Naive thymus-derived CD4-positive, alpha-beta T cell (primary cell): ENCODE measurements at regions of chr4 and their contacts with region 1.

Region 1: GRCh38 chr4:52861879-52862616 is at the start of gene RASL11B:
- DNase-seq: peak; percentile 73 to 91 (median 84)
- ATAC-seq: peak; percentile 99
- H3K4me3 ChIP-seq: peak within 1 kb of the TSS; percentile 58
- H3K4me3 Mint-ChIP-seq: peak within 1 kb of the TSS; percentile 74 to 88 (median 84)
- H3K27ac ChIP-seq: peak within 1 kb of the TSS; percentile 34
- H3K27ac Mint-ChIP-seq: peak within 1 kb of the TSS in 5 of 9 donors; percentile 16 to 87 (median 49)
- H3K4me1 ChIP-seq: peaks cover 0 to 6% of the 10 kb centered on the region in 2 donors
- H3K4me1 Mint-ChIP-seq: peaks cover 0 to 17% (median 8%) of the 10 kb centered on the region in 7 donors
- H3K27me3 ChIP-seq: no peaks in the 10 kb centered on the region
- H3K27me3 Mint-ChIP-seq: peaks cover 28 to 41% (median 38%) of the 10 kb centered on the region in 5 donors
- total RNA-seq, gene RASL11B: 0.41 TPM in 1 of 5 experiments, not detected in the others

Region 2: GRCh38 chr4:52659001-52659721 is 202.9 kb before region 1 on chr4 and contains the start of gene USP46:
- CTCF ChIA-PET with region 1: no interaction called
- POLR2A ChIA-PET with region 1: no interaction called
- intact Hi-C with region 1: loop called in 1 of 2 experiments (anchors 5 kb)
- DNase-seq: peak in 7 of 9 donors; percentile 3 to 65 (median 15)
- ATAC-seq: peak; percentile 86
- H3K4me3 ChIP-seq: peak within 1 kb of the TSS; percentile 52
- H3K4me3 Mint-ChIP-seq: peak within 1 kb of the TSS; percentile 83 to 92 (median 87)
- H3K27ac ChIP-seq: peak within 1 kb of the TSS; percentile 37
- H3K27ac Mint-ChIP-seq: peak within 1 kb of the TSS in 6 of 9 donors; percentile 12 to 77 (median 58)
- H3K4me1 ChIP-seq: peaks cover 5% of the 10 kb centered on the region in 2 donors
- H3K4me1 Mint-ChIP-seq: peaks cover 12 to 23% (median 17%) of the 10 kb centered on the region in 7 donors
- H3K27me3 ChIP-seq: no peaks in the 10 kb centered on the region
- H3K27me3 Mint-ChIP-seq: peaks cover 0 to 24% (median 16%) of the 10 kb centered on the region in 5 donors
- total RNA-seq, gene USP46: 3.0 to 11.7 (median 4.0) TPM

Region 3: DNA sequence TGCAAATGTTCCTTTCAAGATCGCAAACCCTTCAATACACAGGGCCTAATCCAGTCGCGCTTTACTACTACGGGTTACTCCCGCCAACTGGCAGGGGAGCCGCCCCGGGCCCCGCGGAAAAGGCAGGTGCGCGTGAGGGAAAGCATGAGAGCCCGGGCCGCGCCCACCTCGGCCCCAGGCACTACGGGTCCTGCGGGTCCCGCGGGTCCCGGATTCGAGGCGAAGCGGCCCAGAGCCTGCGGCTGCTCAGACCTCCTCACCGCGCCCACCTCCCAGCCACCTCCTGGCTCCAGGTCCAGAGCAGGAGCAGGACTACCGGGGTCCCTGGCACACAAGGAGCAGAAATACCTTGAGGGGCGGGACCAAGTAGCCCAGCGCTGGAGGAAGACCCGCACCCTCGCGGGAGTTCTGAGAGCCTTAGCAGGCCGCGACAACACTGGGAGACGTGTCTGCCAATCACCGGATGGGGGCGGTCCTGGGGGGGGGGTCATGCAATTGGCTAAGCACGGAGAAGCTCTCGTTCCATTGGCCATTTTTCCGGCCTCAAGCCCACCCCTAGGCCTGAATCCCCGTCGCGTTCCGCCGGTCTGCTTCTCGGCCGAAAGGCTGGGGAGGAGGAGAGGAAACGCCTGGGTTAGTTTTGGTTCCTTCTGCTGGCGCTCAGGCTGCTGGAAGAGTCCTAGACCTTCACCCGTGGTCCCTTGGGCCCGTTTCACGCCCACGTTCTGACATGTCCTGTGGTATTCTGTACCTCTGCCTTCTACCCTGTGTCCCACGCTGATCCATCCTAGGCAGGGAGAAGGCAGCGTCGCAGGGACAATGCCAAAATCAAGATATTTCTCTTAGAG is 139.9 kb before region 1 on chr4:
- CTCF ChIA-PET with region 1: no interaction called
- POLR2A ChIA-PET with region 1: no interaction called
- intact Hi-C with region 1: loop called (anchors 1 kb)
- DNase-seq: peak; percentile 62 to 87 (median 81)
- ATAC-seq: peak; percentile 99
- H3K4me3 ChIP-seq: peak overlapping the region; percentile 83
- H3K4me3 Mint-ChIP-seq: peak overlapping the region; percentile 55 to 90 (median 79)
- H3K27ac ChIP-seq: peak overlapping the region; percentile 86
- H3K27ac Mint-ChIP-seq: peak overlapping the region; percentile 54 to 95 (median 86)
- H3K4me1 ChIP-seq: no peaks in the 10 kb centered on the region
- H3K4me1 Mint-ChIP-seq: peaks cover 5 to 14% (median 11%) of the 10 kb centered on the region in 7 donors
- H3K27me3 ChIP-seq: no peaks in the 10 kb centered on the region
- H3K27me3 Mint-ChIP-seq: peaks cover 0 to 11% (median 0%) of the 10 kb centered on the region in 5 donors

Region 4: GRCh38 chr4:53015681-53016080 is 153.6 kb after region 1 on chr4:
- CTCF ChIA-PET with region 1: no interaction called
- POLR2A ChIA-PET with region 1: no interaction called
- intact Hi-C with region 1: loop called in 1 of 2 experiments (anchors 5 kb)
- DNase-seq: no peak
- ATAC-seq: no peak
- H3K4me3 ChIP-seq: no peak overlapping the region
- H3K4me3 Mint-ChIP-seq: no peak overlapping the region
- H3K27ac ChIP-seq: no peak overlapping the region
- H3K27ac Mint-ChIP-seq: no peak overlapping the region
- H3K4me1 ChIP-seq: peaks cover 0 to 27% of the 10 kb centered on the region in 2 donors
- H3K4me1 Mint-ChIP-seq: peaks cover 15 to 43% (median 37%) of the 10 kb centered on the region in 7 donors
- H3K27me3 ChIP-seq: no peaks in the 10 kb centered on the region
- H3K27me3 Mint-ChIP-seq: no peaks in the 10 kb centered on the region

Region 5: DNA sequence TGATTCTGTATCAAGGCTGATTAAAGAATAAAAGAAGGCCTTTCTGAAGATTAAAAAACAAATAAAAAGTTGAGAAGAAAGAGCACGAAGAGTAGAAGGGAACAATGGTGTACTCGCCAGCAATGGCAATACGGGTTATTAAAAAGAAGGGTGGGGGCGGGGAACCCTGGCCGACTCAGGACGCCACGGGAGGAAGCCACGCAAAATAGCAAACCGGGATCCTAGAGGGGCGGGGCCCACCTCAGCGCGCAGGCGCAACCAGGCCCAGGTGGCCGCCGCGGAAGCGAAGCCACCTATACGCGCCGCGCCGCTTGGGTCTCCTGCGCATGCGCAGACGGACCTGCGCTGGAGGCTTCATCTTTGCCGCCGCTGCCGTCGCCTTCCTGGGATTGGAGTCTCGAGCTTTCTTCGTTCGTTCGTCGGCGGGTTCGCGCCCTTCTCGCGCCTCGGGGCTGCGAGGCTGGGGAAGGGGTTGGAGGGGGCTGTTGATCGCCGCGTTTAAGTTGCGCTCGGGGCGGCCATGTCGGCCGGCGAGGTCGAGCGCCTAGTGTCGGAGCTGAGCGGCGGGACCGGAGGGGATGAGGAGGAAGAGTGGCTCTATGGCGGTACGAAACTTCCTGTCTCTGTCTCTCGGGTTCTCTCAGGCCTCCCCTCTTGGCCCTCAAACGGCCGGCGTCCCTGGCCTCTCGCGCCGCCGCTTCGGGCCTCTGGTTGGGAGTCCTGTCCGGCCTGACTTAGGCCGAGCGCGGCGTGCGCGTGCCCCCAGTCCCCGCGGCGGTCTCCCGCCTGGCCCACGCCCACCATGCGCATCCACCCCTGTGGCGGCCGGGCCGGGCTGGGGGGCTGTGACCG is 515.5 kb after region 1 on chr4 and contains the start of gene FIP1L1:
- CTCF ChIA-PET with region 1: no interaction called
- POLR2A ChIA-PET with region 1: no interaction called
- intact Hi-C with region 1: loop called in 1 of 2 experiments (anchors 10 kb)
- DNase-seq: peak; percentile 92 to 97 (median 96)
- ATAC-seq: peak; percentile 97
- H3K4me3 ChIP-seq: peak within 1 kb of the TSS; percentile 85
- H3K4me3 Mint-ChIP-seq: peak within 1 kb of the TSS; percentile 94 to 100 (median 99)
- H3K27ac ChIP-seq: peak within 1 kb of the TSS; percentile 89
- H3K27ac Mint-ChIP-seq: peak within 1 kb of the TSS; percentile 97 to 100 (median 99)
- H3K4me1 ChIP-seq: peaks cover 17 to 21% of the 10 kb centered on the region in 2 donors
- H3K4me1 Mint-ChIP-seq: peaks cover 20 to 53% (median 37%) of the 10 kb centered on the region in 7 donors
- H3K27me3 ChIP-seq: no peaks in the 10 kb centered on the region
- H3K27me3 Mint-ChIP-seq: peaks cover 0 to 15% (median 4%) of the 10 kb centered on the region in 5 donors
- total RNA-seq, gene FIP1L1: 57.1 to 91.0 (median 78.7) TPM